Activated naive CD4-positive, alpha-beta T cell treated with anti-CD3 and anti-CD28 coated beads for 36 hours (primary cell): ENCODE measurements at regions of chr2 and their contacts with region 1.

Region 1: DNA sequence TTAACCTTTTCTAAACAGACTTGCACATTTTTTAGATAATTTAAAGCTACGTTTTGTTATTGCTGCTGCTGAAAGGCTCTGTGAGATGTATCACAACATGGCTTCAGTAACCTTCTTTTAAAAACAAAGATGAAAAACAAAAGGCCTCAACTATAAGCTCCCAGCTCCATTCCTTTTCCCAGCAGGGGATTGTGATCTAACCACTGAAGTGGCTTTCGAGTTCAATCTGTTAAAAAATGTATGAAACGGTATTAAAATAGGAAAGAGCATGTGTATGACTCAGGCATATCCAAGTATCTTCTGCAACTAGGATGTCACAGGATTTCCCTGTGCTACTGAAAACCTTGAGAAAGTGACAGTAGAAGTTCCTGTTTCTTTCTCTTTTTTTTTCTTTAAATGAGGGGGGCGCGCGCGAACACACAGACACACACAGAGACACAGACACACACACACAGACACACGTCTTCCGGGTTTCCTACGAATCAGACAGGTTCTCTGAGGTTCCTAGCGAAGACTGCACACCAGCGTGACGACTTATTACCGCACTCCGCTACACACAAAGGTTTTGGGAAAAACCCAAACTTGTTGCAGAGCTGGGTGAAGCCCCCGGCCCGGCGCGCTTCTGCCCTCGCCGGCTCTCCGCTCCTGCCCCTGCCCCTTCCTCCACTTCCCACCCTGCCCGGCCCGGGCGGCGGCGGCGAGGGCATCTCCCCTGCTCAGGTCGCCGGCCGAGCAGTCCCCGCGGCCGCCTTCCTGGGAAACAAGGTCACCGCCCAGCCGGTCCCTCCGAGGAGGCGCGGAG is 86.8 kb downstream of the RBMS1 start:
- DNase-seq: peak; percentile 85
- H3K4me3 Mint-ChIP-seq: peak overlapping the region; percentile 81
- H3K27ac Mint-ChIP-seq: peak overlapping the region; percentile 94
- H3K4me1 Mint-ChIP-seq: peaks cover 75% of the 10 kb centered on the region
- H3K27me3 Mint-ChIP-seq: no peaks in the 10 kb centered on the region

Region 2: DNA sequence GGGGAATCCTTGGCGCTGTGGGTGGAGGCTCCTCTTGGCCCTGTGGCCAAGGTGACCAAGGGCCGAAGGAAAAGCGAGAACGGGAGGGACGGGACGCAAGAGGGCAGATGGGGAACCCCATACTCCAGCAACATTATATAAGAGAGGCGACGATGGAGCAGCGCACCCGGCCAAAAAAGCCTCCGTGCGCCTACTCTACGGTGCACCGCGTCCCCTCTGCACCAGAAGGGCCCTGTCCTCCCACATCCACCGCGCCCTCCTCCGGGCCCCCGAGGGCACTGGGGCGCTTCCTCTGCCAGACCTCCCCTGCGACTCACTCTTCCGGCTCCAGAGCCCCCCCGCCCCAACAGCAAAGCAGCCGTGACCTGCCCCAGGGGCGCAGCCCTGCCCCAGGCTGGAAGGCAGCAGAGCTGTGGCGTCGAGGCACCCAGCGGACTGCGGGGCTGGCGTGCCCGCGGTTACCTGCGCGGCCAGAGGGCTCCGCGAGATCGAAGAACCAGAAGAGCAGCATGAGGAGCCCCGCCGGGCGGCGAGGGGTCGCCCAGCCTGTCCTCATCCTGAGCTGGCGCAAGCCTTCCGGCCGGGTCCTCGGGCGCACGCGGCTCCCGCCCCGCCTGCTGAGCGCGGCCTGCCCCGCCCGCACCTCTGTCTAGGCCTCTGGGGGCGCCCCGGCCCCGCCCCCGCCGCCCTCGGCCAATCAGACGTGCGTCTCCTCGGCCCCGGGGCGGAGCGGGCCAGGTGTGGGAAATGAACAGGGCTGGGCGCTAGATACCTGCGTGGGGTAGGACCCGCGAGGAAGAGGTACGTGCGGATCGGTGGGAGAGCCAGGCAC is 502.4 kb before region 1 on chr2:
- CTCF ChIA-PET with region 1: no interaction called
- intact Hi-C with region 1: loop called (anchors 2 kb)
- DNase-seq: peak; percentile 82
- H3K4me3 Mint-ChIP-seq: peak within 1 kb of the TSS; percentile 93
- H3K27ac Mint-ChIP-seq: peak within 1 kb of the TSS; percentile 93
- H3K4me1 Mint-ChIP-seq: peaks cover 58% of the 10 kb centered on the region
- H3K27me3 Mint-ChIP-seq: no peaks in the 10 kb centered on the region

Region 3: GRCh38 chr2:159933727-159934049 is 473.1 kb before region 1 on chr2:
- CTCF ChIA-PET with region 1: no interaction called
- intact Hi-C with region 1: no loop called
- DNase-seq: no peak
- H3K4me3 Mint-ChIP-seq: no peak overlapping the region
- H3K27ac Mint-ChIP-seq: no peak overlapping the region
- H3K4me1 Mint-ChIP-seq: peaks cover 3% of the 10 kb centered on the region
- H3K27me3 Mint-ChIP-seq: no peaks in the 10 kb centered on the region

Region 4: DNA sequence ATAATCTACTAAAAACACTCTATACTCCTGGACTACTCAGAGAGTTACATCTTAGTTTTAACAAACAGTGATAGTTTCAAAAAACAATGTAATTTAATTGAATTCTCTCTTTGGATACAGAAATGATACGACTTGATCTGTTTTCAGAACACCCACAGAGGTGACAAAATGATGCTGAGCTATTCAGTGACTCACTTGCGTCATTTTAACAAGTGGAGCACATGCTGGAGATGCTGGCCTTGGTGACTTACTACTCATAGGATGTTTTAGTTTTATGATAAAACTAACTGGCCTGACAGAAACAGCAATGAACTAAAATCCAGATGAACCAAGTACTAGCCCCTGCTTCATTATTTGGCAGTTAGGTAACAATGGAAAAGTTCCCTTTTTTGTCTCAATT is 105.4 kb before region 1 on chr2:
- CTCF ChIA-PET with region 1: no interaction called
- intact Hi-C with region 1: loop called (anchors 1 kb)
- DNase-seq: peak; percentile 73
- H3K4me3 Mint-ChIP-seq: no peak overlapping the region
- H3K27ac Mint-ChIP-seq: peak overlapping the region; percentile 76
- H3K4me1 Mint-ChIP-seq: peaks cover 63% of the 10 kb centered on the region
- H3K27me3 Mint-ChIP-seq: no peaks in the 10 kb centered on the region

Region 5: DNA sequence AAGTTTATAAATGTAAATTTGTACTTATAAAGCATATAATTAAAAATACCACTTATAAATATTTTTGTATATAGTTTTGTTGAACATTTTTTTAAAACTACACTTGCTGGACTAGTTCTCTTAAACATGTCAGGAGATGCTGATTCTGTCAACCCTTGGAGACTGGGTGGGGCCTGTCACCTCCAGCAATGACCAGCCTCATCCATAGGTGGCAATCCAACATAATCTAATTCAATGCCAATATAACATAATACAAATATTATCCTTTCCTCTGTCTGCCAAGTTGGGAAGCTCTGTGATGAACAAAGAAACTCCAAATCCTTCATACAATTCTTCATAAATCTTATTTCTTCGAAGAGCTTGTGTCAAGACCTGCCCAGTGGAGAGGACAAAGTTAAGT is 53.6 kb before region 1 on chr2:
- CTCF ChIA-PET with region 1: interaction called, 4 read pairs
- intact Hi-C with region 1: loop called (anchors 2 kb)
- DNase-seq: peak; percentile 59
- H3K4me3 Mint-ChIP-seq: no peak overlapping the region
- H3K27ac Mint-ChIP-seq: no peak overlapping the region
- H3K4me1 Mint-ChIP-seq: peaks cover 66% of the 10 kb centered on the region
- H3K27me3 Mint-ChIP-seq: no peaks in the 10 kb centered on the region

Region 6: GRCh38 chr2:160429248-160430000 is 22.6 kb after region 1 on chr2:
- CTCF ChIA-PET with region 1: interaction called, 6 read pairs
- intact Hi-C with region 1: loop called (anchors 1 kb)
- DNase-seq: no peak
- H3K4me3 Mint-ChIP-seq: peak overlapping the region; percentile 47
- H3K27ac Mint-ChIP-seq: peak overlapping the region; percentile 88
- H3K4me1 Mint-ChIP-seq: peaks cover 49% of the 10 kb centered on the region
- H3K27me3 Mint-ChIP-seq: no peaks in the 10 kb centered on the region

Region 7: DNA sequence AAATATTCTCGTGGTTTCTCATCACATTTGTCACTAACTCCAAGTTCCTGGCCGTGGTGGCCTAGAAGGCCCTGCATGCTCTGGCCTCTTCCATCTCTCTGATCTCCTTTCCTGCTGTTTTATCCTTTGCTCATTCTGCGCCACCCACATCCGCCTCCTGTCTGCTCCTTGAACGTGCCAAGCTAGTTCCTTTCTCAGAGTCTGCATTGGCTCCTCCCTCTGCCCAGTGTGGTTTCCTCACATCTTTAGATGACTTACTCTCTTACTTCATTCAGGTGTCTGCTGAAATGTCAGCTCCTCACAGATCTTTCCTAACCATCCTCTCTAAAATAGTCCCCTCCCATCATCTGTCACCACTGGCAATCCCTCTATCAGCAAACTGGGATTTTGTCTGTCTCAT is 245.4 kb after region 1 on chr2:
- CTCF ChIA-PET with region 1: no interaction called
- intact Hi-C with region 1: loop called (anchors 5 kb)
- DNase-seq: peak; percentile 87
- H3K4me3 Mint-ChIP-seq: no peak overlapping the region
- H3K27ac Mint-ChIP-seq: peak overlapping the region; percentile 17
- H3K4me1 Mint-ChIP-seq: peaks cover 30% of the 10 kb centered on the region
- H3K27me3 Mint-ChIP-seq: no peaks in the 10 kb centered on the region

Region 8: GRCh38 chr2:161238560-161239325 is 832.0 kb after region 1 on chr2:
- CTCF ChIA-PET with region 1: no interaction called
- intact Hi-C with region 1: loop called (anchors 5 kb)
- DNase-seq: peak; percentile 71
- H3K4me3 Mint-ChIP-seq: peak overlapping the region; percentile 84
- H3K27ac Mint-ChIP-seq: peak overlapping the region; percentile 47
- H3K4me1 Mint-ChIP-seq: peaks cover 47% of the 10 kb centered on the region
- H3K27me3 Mint-ChIP-seq: no peaks in the 10 kb centered on the region